Activated T-helper 2 cell treated with anti-CD3 and anti-CD28 coated beads, Interferon-gamma antibody, Interleukin-2, Interleukin-4, amounts not matched to agents 10 μg/mL and 5 μg/mL and 100 μg/mL, durations not matched to agents 14 hours and 24 hours and 36 hours (primary cell): ENCODE measurements at regions of chr11 and their contacts with region 1.

Region 1: GRCh38 chr11:35343033-35343598 is 76.2 kb downstream of the SLC1A2 start:
- DNase-seq: peak; percentile 74
- H3K4me3 Mint-ChIP-seq: peak overlapping the region; percentile 20
- H3K27ac Mint-ChIP-seq: peak overlapping the region; percentile 81
- H3K4me1 Mint-ChIP-seq: peaks cover 46% of the 10 kb centered on the region
- H3K27me3 Mint-ChIP-seq: no peaks in the 10 kb centered on the region

Region 2: DNA sequence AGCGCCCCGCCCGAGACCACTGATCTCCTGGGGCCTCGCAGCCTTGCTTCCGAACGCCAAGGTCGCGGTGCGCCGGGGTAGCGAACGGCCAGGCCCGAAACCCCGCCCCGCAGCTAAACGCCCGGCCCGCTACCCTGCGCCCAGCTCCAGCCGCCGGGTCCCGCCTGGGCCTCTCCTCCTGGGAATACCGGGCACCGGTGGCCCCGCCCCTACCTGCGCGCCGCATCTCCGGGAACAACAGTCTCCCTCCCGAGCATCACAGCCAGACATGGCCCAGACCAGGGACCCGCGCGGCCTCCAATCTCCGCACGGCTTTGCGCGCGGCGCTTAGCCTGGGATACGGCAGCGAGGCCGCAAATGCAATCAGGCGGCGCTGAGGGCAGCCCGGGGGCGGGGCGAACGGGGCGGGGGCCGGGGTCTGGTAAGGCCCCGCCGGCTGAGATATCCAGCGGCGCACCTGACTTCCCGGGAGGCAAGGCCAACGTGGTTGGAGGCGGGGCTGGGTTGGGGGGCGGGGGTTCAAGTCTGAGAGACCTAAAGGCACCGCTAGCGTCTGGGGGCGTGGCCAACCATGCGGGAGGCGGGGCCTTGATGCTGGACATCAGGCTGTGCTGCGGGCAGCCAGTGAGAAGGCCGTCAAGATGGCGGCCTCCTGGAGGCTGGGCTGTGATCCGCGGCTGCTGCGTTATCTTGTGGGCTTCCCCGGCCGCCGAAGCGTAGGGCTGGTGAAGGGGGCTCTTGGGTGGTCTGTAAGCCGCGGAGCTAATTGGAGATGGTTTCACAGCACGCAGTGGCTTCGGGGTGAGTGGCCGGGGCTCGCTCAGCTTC is 426.9 kb before region 1 on chr11 and contains the starts of genes APIP and PDHX:
- intact Hi-C with region 1: loop called (anchors 1 kb)
- DNase-seq: peak; percentile 90
- H3K4me3 Mint-ChIP-seq: peak within 1 kb of the TSS; percentile 90
- H3K27ac Mint-ChIP-seq: peak within 1 kb of the TSS; percentile 91
- H3K4me1 Mint-ChIP-seq: peaks cover 29% of the 10 kb centered on the region
- H3K27me3 Mint-ChIP-seq: no peaks in the 10 kb centered on the region
- total RNA-seq, gene APIP: 28.1 and 30.7 TPM in 2 replicates
- total RNA-seq, gene PDHX: 29.7 and 30.6 TPM in 2 replicates

Region 3: DNA sequence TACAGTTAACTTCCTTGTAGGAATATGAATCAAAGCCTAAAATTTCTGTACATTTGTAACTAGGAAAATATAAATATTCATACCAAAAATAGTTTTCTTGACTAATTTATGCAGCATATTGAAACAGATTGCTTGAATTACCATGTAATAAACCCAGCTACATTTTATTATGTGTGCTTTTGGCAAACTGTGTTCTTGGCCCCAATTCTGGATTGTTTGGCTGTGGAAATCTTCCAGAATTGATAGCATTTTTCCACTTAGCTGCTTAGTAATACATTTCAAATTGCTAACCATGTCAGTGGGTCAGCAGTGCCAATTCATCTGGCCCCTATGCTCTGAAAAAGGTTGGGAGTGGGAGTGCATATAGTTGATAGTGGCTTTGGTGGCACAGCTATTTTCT is 394.4 kb before region 1 on chr11:
- intact Hi-C with region 1: no loop called
- DNase-seq: no peak
- H3K4me3 Mint-ChIP-seq: no peak overlapping the region
- H3K27ac Mint-ChIP-seq: no peak overlapping the region
- H3K4me1 Mint-ChIP-seq: peaks cover 11% of the 10 kb centered on the region
- H3K27me3 Mint-ChIP-seq: no peaks in the 10 kb centered on the region